Cardiac septum (tissue), 1 donor: ENCODE measurements at regions of chr10 and their contacts with region 1.

Region 1: GRCh38 chr10:29304264-29305030 is 15.6 kb downstream of the LYZL1 start:
- DNase-seq: no peak

Region 2: DNA sequence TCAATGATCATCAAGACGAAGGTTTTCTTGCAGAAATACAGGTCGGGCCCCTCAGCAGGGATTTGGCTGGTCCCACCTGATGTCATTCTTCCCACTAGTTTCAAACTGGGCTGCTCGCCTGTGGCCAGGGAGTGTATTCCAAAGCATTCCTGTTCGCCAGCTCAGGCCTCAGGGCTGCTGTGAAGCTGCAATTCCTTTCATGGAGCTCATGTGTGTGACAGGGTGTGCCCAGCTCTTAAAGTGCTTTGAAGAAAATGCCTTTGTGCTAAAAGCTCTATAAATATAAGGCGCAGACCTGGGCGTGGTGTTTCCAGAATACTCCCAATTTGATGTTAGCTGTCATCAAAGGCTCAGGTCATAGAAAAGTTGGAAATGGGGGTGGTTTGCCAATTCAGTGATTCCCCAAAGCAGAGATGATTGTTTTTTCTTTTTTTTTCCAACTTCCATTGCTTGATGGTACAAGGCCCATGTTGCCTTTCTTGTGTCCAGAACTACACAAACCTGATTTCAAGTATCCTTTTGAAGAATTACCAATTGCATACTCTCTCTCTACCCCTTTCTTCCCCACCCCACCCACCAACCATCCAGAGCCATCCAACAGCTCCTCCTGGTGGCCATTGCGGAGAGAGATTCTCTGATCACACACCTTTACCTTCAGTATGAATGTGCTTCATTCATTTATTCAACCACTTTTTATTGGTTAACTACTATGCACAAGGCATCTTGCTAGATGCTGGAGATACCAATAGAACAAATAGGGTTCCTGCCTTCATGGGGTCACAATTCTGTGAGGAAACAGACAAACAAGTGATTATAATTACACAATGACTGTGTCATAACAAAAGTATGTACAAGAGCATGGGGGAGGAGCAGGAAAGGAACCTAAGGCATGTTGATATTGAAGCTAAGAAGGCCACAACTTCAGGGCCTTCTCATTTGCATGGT is 312.8 kb before region 1 on chr10:
- intact Hi-C with region 1: loop called (anchors 10 kb)
- DNase-seq: no peak

Region 3: GRCh38 chr10:29131952-29132820 is 172.3 kb before region 1 on chr10:
- intact Hi-C with region 1: loop called (anchors 10 kb)
- DNase-seq: no peak

Region 4: GRCh38 chr10:29239569-29240472 is 64.6 kb before region 1 on chr10:
- intact Hi-C with region 1: loop called (anchors 5 kb)
- DNase-seq: no peak

Region 5: DNA sequence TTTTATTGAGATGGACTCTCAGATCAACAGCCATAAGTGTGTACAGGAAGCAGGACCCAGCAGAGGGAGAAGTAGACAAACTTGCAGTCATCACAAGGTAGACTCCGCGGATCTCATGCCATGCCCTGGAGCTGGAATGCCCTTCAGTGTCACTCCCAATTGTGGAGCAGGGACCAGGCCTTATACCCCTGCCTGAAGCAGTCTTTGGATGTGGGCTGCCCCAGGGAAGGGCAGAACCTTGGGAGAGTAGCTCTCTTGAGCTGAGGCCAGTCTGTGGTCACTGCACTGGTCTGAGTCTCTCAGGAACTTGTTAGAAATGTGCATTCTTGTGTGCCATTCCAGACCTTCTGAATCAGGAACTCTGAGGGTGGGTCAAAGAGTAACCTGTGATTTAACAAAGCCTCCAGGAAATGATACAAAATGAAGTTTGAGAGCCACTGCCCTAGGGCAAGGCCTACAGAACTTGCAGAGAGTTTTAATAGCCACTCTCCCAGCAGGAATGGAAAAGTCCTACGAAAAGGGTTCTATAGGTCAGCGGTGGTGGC is 52.4 kb after region 1 on chr10:
- intact Hi-C with region 1: no loop called
- DNase-seq: no peak